PC-3 (cell line): ENCODE measurements at regions of chr12 and their contacts with region 1.

Region 1: DNA sequence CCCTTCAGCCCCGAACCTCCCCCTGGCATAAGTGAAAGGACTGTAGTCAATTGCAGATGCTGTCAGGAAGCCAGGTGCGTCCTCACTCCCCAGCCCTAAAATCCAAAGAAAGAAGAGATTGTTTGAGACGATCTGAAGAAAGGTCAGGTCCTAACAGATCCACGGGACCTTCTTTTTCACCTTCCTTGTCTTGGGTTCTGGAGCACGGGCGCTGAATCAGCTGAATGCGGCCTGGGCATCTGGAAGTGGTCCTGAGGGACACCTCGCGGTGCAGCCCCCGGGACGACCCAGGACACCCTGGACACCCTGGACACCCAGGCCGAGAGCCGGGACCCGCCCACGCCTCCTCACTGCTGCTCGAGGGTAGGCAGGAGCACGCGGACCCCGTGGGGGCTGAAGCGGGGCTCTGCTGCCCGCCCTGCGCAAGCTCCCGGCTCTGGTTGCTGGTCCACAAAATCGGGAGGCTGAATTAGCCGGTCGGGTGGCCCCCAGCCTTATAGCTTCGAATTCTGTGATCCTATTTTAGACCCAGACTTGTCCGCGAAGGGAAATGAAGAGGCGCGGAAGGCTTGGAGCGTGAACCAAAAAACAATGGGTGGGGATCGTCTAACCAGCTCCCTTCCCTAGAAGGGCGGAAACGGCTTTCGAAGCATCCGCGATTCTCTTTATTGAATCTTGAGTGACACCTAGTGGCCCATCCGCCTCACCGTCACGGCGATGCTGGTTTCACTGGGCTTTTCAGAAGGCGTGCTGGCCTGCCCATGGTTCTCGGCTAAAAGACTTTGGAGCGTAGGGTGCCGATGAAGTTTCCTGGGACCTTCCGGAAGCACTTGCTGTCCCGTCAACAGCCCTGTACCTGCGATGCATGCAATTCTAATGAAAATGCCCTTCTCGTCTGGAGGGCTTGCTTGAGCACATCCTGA is 46.4 kb upstream of the PLXNC1 start:
- DNase-seq: peak; percentile 96
- ATAC-seq: peak; percentile 33
- H3K4me3 ChIP-seq: peak overlapping the region; percentile 75
- H3K27ac ChIP-seq: peak overlapping the region; percentile 18; the same call in 1 of the 2 replicates
- H3K4me1 ChIP-seq: peaks cover 59% of the 10 kb centered on the region
- H3K27me3 ChIP-seq: no peaks in the 10 kb centered on the region
- CTCF ChIP-seq: peak; percentile 79

Region 2: GRCh38 chr12:93502802-93503623 is 599.0 kb before region 1 on chr12:
- CTCF ChIA-PET with region 1: interaction called, 16 read pairs
- POLR2A ChIA-PET with region 1: no interaction called
- intact Hi-C with region 1: loop called (anchors 2 kb)
- DNase-seq: peak; percentile 65
- ATAC-seq: peak; percentile 33; the same call in 1 of the 2 replicates
- H3K4me3 ChIP-seq: no peak overlapping the region
- H3K27ac ChIP-seq: no peak overlapping the region
- H3K4me1 ChIP-seq: no peaks in the 10 kb centered on the region
- H3K27me3 ChIP-seq: no peaks in the 10 kb centered on the region
- CTCF ChIP-seq: peak; percentile 92

Region 3: DNA sequence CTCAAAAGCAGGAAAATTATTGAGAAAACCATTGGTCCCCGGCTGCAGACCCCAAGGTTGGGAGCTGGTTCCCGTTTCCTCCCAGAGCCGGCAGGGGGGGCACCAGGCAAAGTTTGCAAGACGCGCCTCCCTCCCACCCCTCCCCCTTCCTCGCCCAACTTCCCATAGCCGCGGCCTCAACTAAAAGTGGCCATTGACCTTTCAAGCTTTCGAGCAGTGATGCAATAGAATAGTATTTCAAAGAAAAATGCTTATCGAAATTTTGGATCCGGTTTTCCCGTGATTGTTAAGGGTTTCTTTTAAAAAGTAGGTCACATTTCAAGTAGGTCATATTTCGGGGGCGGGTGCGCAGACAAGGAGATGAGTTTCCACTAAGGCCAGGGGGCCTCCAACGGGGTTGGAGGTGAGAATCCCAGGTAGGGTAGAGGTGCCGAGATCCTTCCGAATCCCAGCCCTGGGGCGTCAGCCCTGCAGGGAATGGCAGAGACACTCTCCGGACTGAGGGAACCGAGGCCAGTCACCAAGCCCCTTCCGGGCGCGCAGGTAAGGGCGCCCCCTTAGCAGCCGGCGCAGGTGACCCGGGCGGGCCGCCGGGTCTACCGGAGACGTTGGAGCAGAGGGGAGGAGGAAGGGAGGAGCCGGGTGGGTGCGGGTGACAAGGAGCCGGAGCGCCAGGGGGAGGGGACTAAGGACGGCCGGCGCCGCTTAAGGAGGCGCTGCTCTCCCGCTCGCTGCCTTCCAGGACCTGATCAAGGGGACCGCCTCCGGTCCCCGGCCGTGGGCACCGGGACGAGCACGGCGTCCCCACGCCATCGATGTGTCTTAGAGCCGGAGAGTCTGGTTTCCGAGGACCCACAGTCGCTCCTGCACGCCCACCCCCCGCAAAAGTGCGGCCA is 532.1 kb before region 1 on chr12:
- CTCF ChIA-PET with region 1: interaction called, 29 read pairs
- POLR2A ChIA-PET with region 1: interaction called, 6 read pairs
- intact Hi-C with region 1: loop called (anchors 1 kb)
- DNase-seq: peak; percentile 76
- ATAC-seq: peak; percentile 66
- H3K4me3 ChIP-seq: peak overlapping the region; percentile 90
- H3K27ac ChIP-seq: peak overlapping the region; percentile 61
- H3K4me1 ChIP-seq: peaks cover 16% of the 10 kb centered on the region
- H3K27me3 ChIP-seq: no peaks in the 10 kb centered on the region
- CTCF ChIP-seq: peak; percentile 69

Region 4: DNA sequence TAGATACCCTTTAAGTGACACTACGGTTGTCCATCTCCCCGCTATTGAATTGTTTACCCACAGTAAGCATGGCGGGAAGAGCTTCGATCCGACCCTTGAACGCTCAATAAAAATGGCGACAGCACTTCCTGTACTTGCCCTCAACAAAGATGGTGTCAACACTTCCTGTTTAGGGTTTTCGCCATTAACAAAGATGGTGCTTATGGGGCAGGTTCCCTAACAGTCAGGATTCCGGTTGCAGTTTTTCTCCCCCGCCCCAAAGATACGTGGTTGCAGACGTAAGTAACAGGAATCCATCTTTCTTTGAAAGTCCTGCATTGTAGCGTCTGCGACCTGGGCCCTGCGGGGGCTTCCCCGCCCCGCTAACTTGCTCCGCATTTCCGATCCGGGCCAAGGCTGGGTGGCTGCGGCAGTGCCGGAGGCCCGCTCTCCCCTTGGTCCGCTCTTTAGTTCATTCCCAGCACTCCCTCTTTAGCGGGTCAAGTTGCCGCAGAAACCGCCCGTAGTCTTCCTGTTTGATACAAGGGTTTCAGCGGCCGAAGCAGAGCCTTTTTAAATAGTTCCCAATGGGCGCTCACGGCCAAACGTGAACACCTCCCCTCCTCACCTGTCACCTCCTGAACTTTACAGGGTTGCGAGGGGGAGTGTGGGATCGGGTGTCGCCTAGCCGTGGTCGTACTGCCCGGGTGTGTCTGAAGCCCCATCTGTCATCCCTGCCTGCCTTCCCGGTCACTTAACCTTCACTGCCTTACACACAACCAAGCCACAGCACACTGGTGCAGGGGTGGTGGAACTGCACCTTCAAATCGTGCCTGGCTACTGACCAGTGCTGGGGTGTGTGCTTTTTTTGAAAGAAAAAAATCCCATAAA is 424.6 kb before region 1 on chr12 and contains the start of gene CRADD:
- CTCF ChIA-PET with region 1: no interaction called
- POLR2A ChIA-PET with region 1: interaction called, 4 read pairs
- intact Hi-C with region 1: loop called (anchors 1 kb)
- DNase-seq: peak; percentile 95
- ATAC-seq: peak; percentile 90
- H3K4me3 ChIP-seq: peak within 1 kb of the TSS; percentile 88
- H3K27ac ChIP-seq: peak within 1 kb of the TSS; percentile 94
- H3K4me1 ChIP-seq: peaks cover 15% of the 10 kb centered on the region
- H3K27me3 ChIP-seq: no peaks in the 10 kb centered on the region
- CTCF ChIP-seq: no peak
- total RNA-seq, gene CRADD: 11.4 and 12.5 TPM in 2 replicates

Region 5: GRCh38 chr12:93785262-93786010 is 316.6 kb before region 1 on chr12:
- CTCF ChIA-PET with region 1: interaction called, 7 read pairs
- POLR2A ChIA-PET with region 1: no interaction called
- intact Hi-C with region 1: loop called (anchors 1 kb)
- DNase-seq: peak; percentile 98
- ATAC-seq: peak; percentile 93
- H3K4me3 ChIP-seq: peak overlapping the region; percentile 13; the same call in 1 of the 2 replicates
- H3K27ac ChIP-seq: peak overlapping the region; percentile 96
- H3K4me1 ChIP-seq: peaks cover 66% of the 10 kb centered on the region
- H3K27me3 ChIP-seq: no peaks in the 10 kb centered on the region
- CTCF ChIP-seq: no peak

Region 6: GRCh38 chr12:93979189-93979588 is 122.8 kb before region 1 on chr12:
- CTCF ChIA-PET with region 1: interaction called, 11 read pairs
- POLR2A ChIA-PET with region 1: no interaction called
- intact Hi-C with region 1: loop called (anchors 1 kb)
- DNase-seq: peak; percentile 65
- ATAC-seq: peak; percentile 42; the same call in 1 of the 2 replicates
- H3K4me3 ChIP-seq: no peak overlapping the region
- H3K27ac ChIP-seq: no peak overlapping the region
- H3K4me1 ChIP-seq: peaks cover 5% of the 10 kb centered on the region
- H3K27me3 ChIP-seq: no peaks in the 10 kb centered on the region
- CTCF ChIP-seq: peak; percentile 74

Region 7: DNA sequence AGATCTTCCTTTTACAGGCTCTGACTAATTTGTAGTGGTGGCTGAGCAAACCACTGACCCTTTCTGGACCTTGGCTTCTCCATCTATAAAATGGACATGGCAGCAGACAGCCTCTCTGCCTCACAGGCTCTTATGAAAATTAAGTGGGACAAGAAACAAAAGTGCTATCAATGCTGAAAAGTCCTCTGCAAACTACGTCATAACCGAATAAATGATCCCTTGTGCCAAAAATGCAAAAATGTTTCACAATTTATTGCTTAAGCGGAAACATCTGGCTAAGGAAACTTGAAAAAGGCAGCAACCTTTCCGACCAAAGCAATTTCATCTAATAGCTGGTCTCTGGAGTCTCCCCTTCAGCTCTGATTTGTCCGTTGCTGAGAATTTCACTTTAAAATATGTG is 62.1 kb before region 1 on chr12:
- CTCF ChIA-PET with region 1: no interaction called
- POLR2A ChIA-PET with region 1: no interaction called
- intact Hi-C with region 1: no loop called
- DNase-seq: no peak
- ATAC-seq: no peak
- H3K4me3 ChIP-seq: no peak overlapping the region
- H3K27ac ChIP-seq: no peak overlapping the region
- H3K4me1 ChIP-seq: no peaks in the 10 kb centered on the region
- H3K27me3 ChIP-seq: no peaks in the 10 kb centered on the region
- CTCF ChIP-seq: no peak